Heart right ventricle (tissue), 16 donors: ENCODE measurements at regions of chr9 and their contacts with region 1.

Region 1: GRCh38 chr9:16611983-16612382 is 258.5 kb downstream of the BNC2 start:
- DNase-seq: no peak
- ATAC-seq: no peak
- H3K4me3 ChIP-seq: no peak overlapping the region
- H3K27ac ChIP-seq: no peak overlapping the region
- H3K4me1 ChIP-seq: no peaks in the 10 kb centered on the region
- H3K27me3 ChIP-seq: no peaks in the 10 kb centered on the region
- CTCF ChIP-seq: no peak

Region 2: DNA sequence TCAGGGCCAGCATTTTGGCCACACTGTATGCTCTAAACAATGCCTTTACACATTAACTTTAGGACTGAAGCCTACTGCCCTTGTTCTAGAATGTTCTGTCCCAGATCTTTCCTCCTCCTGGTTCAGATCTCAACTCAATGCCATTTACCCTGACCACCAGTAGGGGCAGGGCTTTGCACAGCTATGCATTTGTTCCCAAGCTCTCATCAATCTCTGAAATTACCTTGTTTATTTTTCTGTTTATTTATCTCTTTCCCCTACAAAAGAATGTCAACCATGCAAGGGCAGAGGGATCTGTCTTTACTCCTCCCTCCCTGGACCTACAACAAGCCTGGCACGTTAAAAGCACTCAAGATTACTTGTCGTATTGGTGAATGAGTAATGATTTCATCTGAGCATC is 354.4 kb before region 1 on chr9:
- intact Hi-C with region 1: loop called in 1 of 10 experiments (anchors 10 kb)
- DNase-seq: no peak
- ATAC-seq: no peak
- H3K4me3 ChIP-seq: no peak overlapping the region
- H3K27ac ChIP-seq: no peak overlapping the region
- H3K4me1 ChIP-seq: no peaks in the 10 kb centered on the region
- H3K27me3 ChIP-seq: peaks cover 0 to 6% (median 4%) of the 10 kb centered on the region in 7 donors
- CTCF ChIP-seq: peak in 8 of 9 donors; percentile 9 to 53 (median 44)

Region 3: GRCh38 chr9:16689352-16689938 is 77.5 kb after region 1 on chr9:
- intact Hi-C with region 1: loop called in 1 of 10 experiments (anchors 10 kb)
- DNase-seq: peak; percentile 18 to 24
- ATAC-seq: peak in 3 of 8 donors; percentile 42 to 50 (median 46)
- H3K4me3 ChIP-seq: no peak overlapping the region
- H3K27ac ChIP-seq: peak overlapping the region in 1 of 10 donors; percentile 34
- H3K4me1 ChIP-seq: peaks cover 0 to 25% (median 6%) of the 10 kb centered on the region in 9 donors
- H3K27me3 ChIP-seq: peaks cover 0 to 5% (median 0%) of the 10 kb centered on the region in 7 donors
- CTCF ChIP-seq: no peak